GM12878 (cell line): ENCODE measurements at regions of chr14 and their contacts with region 1.

Region 1: DNA sequence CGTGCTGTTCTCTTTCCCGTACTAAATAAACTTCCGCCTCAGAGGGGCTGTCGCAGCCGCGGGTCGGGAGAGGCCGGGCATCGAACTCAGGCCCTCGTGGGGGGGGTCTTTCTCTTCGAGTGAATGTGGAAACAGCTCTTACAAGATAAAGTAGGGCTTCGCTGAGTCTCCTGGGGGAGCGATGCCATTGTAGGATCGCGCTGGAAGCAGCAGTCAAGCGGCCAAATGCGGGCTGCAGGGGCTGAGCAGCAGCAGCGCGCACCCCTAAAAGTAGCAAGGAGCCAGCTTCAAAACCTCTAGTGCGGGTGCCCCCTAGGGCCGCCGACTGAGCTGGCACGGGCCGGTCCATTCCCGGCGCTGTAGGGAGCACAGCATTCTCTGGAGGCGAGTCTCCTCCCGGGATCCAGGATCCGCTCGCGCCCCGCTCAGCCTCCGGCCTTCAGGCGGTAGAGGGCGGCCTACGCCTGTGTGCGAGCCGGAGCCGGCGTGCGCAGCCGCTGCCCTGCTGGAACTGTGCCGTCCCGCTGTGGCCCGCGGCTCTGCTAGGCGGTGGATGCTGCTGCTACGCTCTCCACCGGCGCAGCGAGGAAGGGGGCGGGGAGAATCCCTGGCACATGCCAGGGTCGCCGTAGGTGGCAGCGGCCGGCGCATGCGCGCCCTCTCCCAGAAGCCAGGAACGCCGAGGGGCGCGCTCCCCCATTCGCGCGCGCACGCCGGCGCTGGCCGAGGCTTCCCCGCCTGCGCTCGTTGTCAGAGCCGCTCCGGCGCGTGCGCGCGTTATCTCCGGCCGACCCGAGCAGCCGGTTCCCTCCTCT is at the start of gene FUT8:
- DNase-seq: peak; percentile 80
- ATAC-seq: peak; percentile 89
- H3K4me3 ChIP-seq: peak within 1 kb of the TSS; percentile 97
- H3K27ac ChIP-seq: peak within 1 kb of the TSS; percentile 88
- H3K4me1 ChIP-seq: no peaks in the 10 kb centered on the region
- H3K27me3 ChIP-seq: no peaks in the 10 kb centered on the region
- CTCF ChIP-seq: peak; percentile 51 to 67 (median 61)
- EP300 ChIP-seq: no peak
- POLR2A ChIP-seq: peak; percentile 90
- RAD21 ChIP-seq: peak; percentile 54
- polyA plus RNA-seq, gene FUT8: 25.0 to 45.6 TPM

Region 2: GRCh38 chr14:64942531-64943111 is 469.6 kb before region 1 on chr14 and contains the start of gene GPX2:
- CTCF ChIA-PET with region 1: no interaction called
- POLR2A ChIA-PET with region 1: no interaction called
- RAD21 ChIA-PET with region 1: no interaction called
- SMC1A ChIA-PET with region 1: no interaction called
- in situ Hi-C with region 1: no loop called
- intact Hi-C with region 1: no loop called
- DNase-seq: no peak
- ATAC-seq: no peak
- H3K4me3 ChIP-seq: no peak within 1 kb of the TSS
- H3K27ac ChIP-seq: no peak within 1 kb of the TSS
- H3K4me1 ChIP-seq: no peaks in the 10 kb centered on the region
- H3K27me3 ChIP-seq: no peaks in the 10 kb centered on the region
- CTCF ChIP-seq: no peak
- EP300 ChIP-seq: no peak
- POLR2A ChIP-seq: no peak
- RAD21 ChIP-seq: no peak
- polyA plus RNA-seq, gene GPX2: not detected

Region 3: DNA sequence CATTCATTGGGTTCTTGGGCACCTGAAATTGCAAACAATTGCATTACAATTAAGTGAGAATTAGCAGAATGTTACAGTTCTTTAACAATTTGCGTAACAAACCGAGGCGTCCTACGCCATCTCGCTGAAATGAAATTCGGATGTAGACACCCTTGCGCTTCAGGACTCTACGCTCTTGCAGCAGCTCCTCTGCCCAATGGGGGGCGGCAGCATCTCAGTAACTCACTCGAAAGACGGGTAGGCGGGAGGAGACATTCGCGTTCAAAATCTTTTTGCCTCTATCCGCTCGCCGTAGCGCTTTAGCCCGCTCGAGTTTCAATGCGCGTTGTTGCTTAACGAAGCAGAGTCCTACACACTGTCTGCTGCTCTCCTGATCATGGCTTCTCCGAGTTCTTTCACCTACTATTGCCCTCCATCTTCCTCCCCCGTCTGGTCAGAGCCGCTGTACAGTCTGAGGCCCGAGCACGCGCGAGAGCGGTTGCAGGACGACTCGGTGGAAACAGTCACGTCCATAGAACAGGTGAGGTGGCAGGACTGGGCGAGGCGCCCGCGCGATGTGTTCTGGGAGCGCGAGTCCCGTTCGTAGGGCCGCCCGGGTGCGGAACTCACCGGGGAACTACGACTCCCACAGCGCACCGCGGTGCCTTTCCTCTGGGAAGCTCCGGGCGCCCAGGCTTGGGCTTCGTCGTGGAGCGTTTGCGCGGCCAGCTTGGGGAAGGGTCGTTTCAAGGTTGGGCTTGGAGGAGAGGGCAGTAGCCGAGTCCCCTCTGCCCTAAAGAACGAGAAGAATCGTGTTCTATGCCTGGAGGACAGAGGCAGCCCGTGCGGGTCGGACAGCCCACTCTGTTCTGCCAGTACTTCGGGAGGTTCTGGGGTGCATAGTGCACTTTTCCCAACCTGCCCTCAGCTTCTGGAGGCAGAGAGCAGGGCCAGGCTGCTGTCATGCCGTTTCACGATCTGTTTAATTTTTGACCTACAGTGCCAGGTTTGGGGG is 425.4 kb before region 1 on chr14 and contains the start of gene FNTB:
- CTCF ChIA-PET with region 1: interaction called, 11 read pairs
- POLR2A ChIA-PET with region 1: no interaction called
- RAD21 ChIA-PET with region 1: interaction called, 4 read pairs
- SMC1A ChIA-PET with region 1: interaction called, 4 read pairs
- in situ Hi-C with region 1: no loop called
- intact Hi-C with region 1: no loop called
- DNase-seq: peak; percentile 94
- ATAC-seq: peak; percentile 99
- H3K4me3 ChIP-seq: peak within 1 kb of the TSS; percentile 93
- H3K27ac ChIP-seq: peak within 1 kb of the TSS; percentile 80
- H3K4me1 ChIP-seq: peaks cover 26% of the 10 kb centered on the region
- H3K27me3 ChIP-seq: no peaks in the 10 kb centered on the region
- CTCF ChIP-seq: peak; percentile 78 to 99 (median 97); a peak in 5 of 6 replicates
- EP300 ChIP-seq: no peak
- POLR2A ChIP-seq: peak; percentile 82
- RAD21 ChIP-seq: peak; percentile 94
- polyA plus RNA-seq, gene FNTB: 10.4 to 14.2 TPM

Region 4: GRCh38 chr14:65015391-65015790 is 396.8 kb before region 1 on chr14:
- CTCF ChIA-PET with region 1: no interaction called
- POLR2A ChIA-PET with region 1: no interaction called
- RAD21 ChIA-PET with region 1: no interaction called
- SMC1A ChIA-PET with region 1: no interaction called
- in situ Hi-C with region 1: no loop called
- intact Hi-C with region 1: no loop called
- DNase-seq: no peak
- ATAC-seq: no peak
- H3K4me3 ChIP-seq: no peak overlapping the region
- H3K27ac ChIP-seq: no peak overlapping the region
- H3K4me1 ChIP-seq: no peaks in the 10 kb centered on the region
- H3K27me3 ChIP-seq: no peaks in the 10 kb centered on the region
- CTCF ChIP-seq: no peak
- EP300 ChIP-seq: no peak
- POLR2A ChIP-seq: no peak
- RAD21 ChIP-seq: no peak

Region 5: DNA sequence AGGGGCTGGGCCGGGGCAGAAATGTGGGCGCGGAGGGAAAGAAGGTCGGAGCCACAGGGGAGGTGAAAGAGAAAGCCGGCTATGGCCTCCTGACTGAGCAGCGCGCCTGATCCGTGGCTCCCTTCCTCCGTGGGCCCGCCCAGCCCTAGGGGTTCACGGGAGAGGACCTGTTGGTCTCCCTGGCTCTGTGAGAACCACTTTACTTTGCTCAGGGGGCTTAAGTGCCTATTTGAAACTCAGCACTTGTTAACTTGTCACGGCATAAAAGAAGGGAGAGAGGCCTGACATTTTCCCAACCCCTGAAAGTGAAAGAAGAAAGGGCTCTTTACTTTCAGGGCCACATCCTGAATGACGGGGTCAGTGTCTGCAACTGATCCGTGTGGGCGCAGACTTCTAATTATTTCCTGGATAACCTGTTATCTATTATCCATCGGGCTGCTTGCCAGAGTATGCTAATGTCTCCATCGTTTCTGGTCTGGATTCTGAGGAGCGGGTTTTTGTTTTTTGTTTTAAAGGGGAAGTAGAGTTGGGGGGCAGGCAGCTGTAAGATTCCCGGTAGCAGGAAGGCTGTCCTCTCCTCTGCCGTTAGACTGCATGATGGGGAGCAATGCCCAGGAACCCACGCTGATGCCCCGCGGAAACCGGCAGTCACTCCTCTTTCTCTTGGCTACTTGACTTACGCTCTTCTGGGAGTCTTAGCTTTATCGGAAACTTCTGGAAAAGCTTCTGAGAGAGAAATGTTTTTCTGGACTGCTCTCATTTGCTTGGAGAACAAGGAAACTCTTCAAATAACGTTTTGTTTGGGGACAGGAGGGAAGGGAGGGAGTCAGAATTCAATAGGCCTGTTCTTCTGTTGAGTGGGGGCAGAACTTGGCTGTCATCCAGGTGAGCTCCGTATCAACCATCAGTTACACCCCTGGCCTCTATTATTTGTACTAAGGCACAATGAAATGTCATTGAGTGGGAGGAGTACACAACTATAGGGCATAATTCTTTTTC is 182.2 kb before region 1 on chr14:
- CTCF ChIA-PET with region 1: interaction called, 136 read pairs
- POLR2A ChIA-PET with region 1: interaction called, 4 read pairs
- RAD21 ChIA-PET with region 1: interaction called, 30 read pairs
- SMC1A ChIA-PET with region 1: interaction called, 34 read pairs
- in situ Hi-C with region 1: no loop called
- intact Hi-C with region 1: no loop called
- DNase-seq: no peak
- ATAC-seq: peak; percentile 60
- H3K4me3 ChIP-seq: 0 out of 2 replicates have a peak overlapping the region, but pooled peaks have one; percentile 26
- H3K27ac ChIP-seq: peak overlapping the region; percentile 64
- H3K4me1 ChIP-seq: peaks cover 41% of the 10 kb centered on the region
- H3K27me3 ChIP-seq: no peaks in the 10 kb centered on the region
- CTCF ChIP-seq: no peak
- EP300 ChIP-seq: no peak
- POLR2A ChIP-seq: no peak
- RAD21 ChIP-seq: no peak

Region 6: DNA sequence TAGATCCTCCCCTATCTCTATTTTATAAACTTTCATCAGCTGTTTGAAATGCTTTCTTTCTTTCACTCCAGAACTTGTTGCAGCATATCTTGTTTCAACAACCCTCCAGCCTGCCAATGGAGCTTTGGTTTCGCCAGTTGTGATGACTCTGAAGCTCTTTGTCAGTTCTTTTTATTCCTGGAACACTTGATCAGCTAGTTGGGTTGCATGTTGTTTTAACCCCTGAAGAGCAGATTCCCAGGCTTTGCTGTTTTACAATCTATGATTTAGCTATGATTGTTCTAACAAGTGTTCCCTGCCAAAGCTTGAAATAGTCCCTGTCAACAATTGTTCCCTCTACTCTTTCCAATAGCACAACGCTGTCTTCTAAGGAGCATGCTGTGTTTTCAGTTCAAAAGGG is 50.3 kb before region 1 on chr14:
- CTCF ChIA-PET with region 1: interaction called, 11 read pairs
- POLR2A ChIA-PET with region 1: interaction called, 3 read pairs
- RAD21 ChIA-PET with region 1: interaction called, 7 read pairs
- SMC1A ChIA-PET with region 1: interaction called, 6 read pairs
- in situ Hi-C with region 1: no loop called
- intact Hi-C with region 1: loop called (anchors 2 kb)
- DNase-seq: no peak
- ATAC-seq: no peak
- H3K4me3 ChIP-seq: no peak overlapping the region
- H3K27ac ChIP-seq: no peak overlapping the region
- H3K4me1 ChIP-seq: peaks cover 24% of the 10 kb centered on the region
- H3K27me3 ChIP-seq: no peaks in the 10 kb centered on the region
- CTCF ChIP-seq: no peak
- EP300 ChIP-seq: no peak
- POLR2A ChIP-seq: no peak
- RAD21 ChIP-seq: no peak

Region 7: DNA sequence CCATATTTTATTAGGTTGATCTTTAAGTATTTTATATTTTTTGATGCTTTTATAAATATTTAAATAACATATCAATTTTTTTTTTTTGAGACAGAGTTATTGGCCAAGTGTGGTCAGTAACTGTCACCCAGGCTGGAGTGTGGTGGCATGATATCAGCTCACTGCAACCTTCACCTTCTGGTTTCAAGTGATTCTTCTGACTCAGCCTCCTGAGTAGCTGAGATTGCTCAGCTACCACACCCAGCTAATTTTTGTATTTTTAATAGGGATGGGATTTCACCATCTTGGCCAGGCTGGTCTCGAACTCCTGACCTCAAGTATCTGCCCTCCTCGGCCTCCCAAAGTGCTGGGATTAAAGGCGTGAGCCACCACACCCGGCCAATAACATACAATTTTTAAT is 71.4 kb after region 1 on chr14:
- CTCF ChIA-PET with region 1: interaction called, 20 read pairs
- POLR2A ChIA-PET with region 1: interaction called, 3 read pairs
- RAD21 ChIA-PET with region 1: interaction called, 11 read pairs
- SMC1A ChIA-PET with region 1: interaction called, 43 read pairs
- in situ Hi-C with region 1: no loop called
- intact Hi-C with region 1: loop called (anchors 5 kb)
- DNase-seq: no peak
- ATAC-seq: peak; percentile 74
- H3K4me3 ChIP-seq: no peak overlapping the region
- H3K27ac ChIP-seq: no peak overlapping the region
- H3K4me1 ChIP-seq: peaks cover 15% of the 10 kb centered on the region
- H3K27me3 ChIP-seq: no peaks in the 10 kb centered on the region
- CTCF ChIP-seq: no peak
- EP300 ChIP-seq: no peak
- POLR2A ChIP-seq: no peak
- RAD21 ChIP-seq: no peak

Region 8: DNA sequence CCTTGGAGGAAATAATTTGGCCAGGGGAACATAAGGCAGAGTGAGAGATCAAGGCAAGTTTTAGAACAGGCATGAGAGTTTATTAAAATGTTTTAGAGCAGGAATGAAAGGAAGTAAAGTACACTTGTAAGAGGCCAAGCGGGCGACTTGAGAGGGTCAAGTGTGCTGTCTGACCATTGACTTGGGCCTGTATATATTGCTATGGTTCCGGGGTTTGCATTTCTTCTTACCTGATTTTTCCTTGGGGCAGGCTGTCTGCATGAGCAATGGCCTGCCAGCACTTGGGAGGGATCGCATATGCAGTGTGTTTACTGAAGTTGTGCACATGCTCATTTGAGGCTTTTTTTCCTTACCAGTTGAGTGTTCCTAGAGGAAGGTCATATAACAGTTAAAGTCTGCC is 215.1 kb after region 1 on chr14:
- CTCF ChIA-PET with region 1: interaction called, 5 read pairs
- POLR2A ChIA-PET with region 1: no interaction called
- RAD21 ChIA-PET with region 1: interaction called, 14 read pairs
- SMC1A ChIA-PET with region 1: interaction called, 18 read pairs
- in situ Hi-C with region 1: no loop called
- intact Hi-C with region 1: no loop called
- DNase-seq: no peak
- ATAC-seq: no peak
- H3K4me3 ChIP-seq: no peak overlapping the region
- H3K27ac ChIP-seq: no peak overlapping the region
- H3K4me1 ChIP-seq: no peaks in the 10 kb centered on the region; the same call in 1 of the 2 replicates
- H3K27me3 ChIP-seq: no peaks in the 10 kb centered on the region
- CTCF ChIP-seq: no peak
- EP300 ChIP-seq: no peak
- POLR2A ChIP-seq: no peak
- RAD21 ChIP-seq: no peak

Region 9: GRCh38 chr14:65958664-65959562 is 546.7 kb after region 1 on chr14:
- CTCF ChIA-PET with region 1: interaction called, 84 read pairs
- POLR2A ChIA-PET with region 1: interaction called, 7 read pairs
- RAD21 ChIA-PET with region 1: interaction called, 46 read pairs
- SMC1A ChIA-PET with region 1: interaction called, 42 read pairs
- in situ Hi-C with region 1: loop called (anchors 5 kb)
- intact Hi-C with region 1: loop called (anchors 1 kb)
- DNase-seq: no peak
- ATAC-seq: peak; percentile 82
- H3K4me3 ChIP-seq: no peak overlapping the region
- H3K27ac ChIP-seq: no peak overlapping the region
- H3K4me1 ChIP-seq: no peaks in the 10 kb centered on the region
- H3K27me3 ChIP-seq: peaks cover 2 to 4% of the 10 kb centered on the region in 2 experiments; a peak in 2 of 4 replicates
- CTCF ChIP-seq: peak; percentile 22 to 55 (median 42); a peak in 4 of 6 replicates
- EP300 ChIP-seq: no peak
- POLR2A ChIP-seq: no peak
- RAD21 ChIP-seq: peak; percentile 57